ENCODE measurements at regions of chr21 and their contacts with region 1.

Region 1: GRCh38 chr21:37267269-37268184 is at the start of gene VPS26C:
- DNase-seq: peak; percentile 97
- ATAC-seq: peak; percentile 88
- H3K4me3 ChIP-seq: peak within 1 kb of the TSS; percentile 63 to 82
- H3K27ac ChIP-seq: peak within 1 kb of the TSS; percentile 97
- H3K4me1 ChIP-seq: peaks cover 5 to 34% of the 10 kb centered on the region in 2 experiments
- H3K27me3 ChIP-seq: no peaks in the 10 kb centered on the region
- CTCF ChIP-seq: no peak
- POLR2A ChIP-seq: no peak
- RAD21 ChIP-seq: no peak
- total RNA-seq, gene VPS26C: 42.1 TPM

Region 2: GRCh38 chr21:37366482-37367316 is 99.2 kb after region 1 on chr21 and contains the start of gene DYRK1A:
- CTCF ChIA-PET with region 1: no interaction called
- POLR2A ChIA-PET with region 1: interaction called, 4 read pairs
- RAD21 ChIA-PET with region 1: no interaction called
- intact Hi-C with region 1: loop called (anchors 1 kb)
- DNase-seq: peak; percentile 97
- ATAC-seq: peak; percentile 86
- H3K4me3 ChIP-seq: peak within 1 kb of the TSS; percentile 78 to 79
- H3K27ac ChIP-seq: peak within 1 kb of the TSS; percentile 99
- H3K4me1 ChIP-seq: peaks cover 31 to 46% of the 10 kb centered on the region in 2 experiments
- H3K27me3 ChIP-seq: no peaks in the 10 kb centered on the region
- CTCF ChIP-seq: no peak
- POLR2A ChIP-seq: peak; percentile 33
- RAD21 ChIP-seq: no peak
- total RNA-seq, gene DYRK1A: 49.3 TPM

Region 3: DNA sequence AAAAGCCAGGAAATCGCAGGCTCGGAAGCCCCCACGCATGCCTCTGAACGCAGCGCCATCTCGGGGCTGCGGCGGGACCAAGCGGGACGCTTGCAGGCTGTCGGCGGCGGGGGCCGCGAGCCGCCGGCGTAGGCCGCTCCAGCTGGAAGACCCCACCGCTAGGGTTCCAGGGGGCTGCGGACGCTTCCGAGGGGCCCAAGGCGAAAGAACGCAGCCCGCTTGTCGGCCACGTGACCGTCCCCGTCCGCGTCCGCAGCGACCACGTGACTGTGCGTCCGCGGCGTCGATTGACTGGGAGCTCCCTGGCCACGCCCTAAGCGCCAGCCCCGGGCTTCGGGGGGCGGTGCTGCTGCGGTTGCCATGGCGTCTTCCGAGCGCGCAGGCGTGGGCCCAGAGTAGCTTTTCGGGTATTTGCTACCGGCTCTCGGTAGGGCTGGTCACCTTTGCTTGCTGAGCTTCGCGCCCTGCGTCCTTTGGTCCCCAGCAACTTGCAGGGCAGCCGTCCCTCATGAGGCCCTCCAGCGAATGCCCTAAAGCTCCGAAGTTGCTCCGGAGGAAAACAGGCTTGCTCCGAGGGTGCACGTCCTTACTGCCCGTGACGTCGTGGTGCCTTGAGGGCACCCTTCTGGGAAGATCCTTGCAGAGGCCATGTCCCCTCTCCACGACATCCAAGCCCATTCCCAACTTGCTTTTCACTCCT is 296.3 kb after region 1 on chr21:
- CTCF ChIA-PET with region 1: no interaction called
- POLR2A ChIA-PET with region 1: no interaction called
- RAD21 ChIA-PET with region 1: no interaction called
- intact Hi-C with region 1: loop called (anchors 2 kb)
- DNase-seq: peak; percentile 79
- ATAC-seq: peak; percentile 83
- H3K4me3 ChIP-seq: peak overlapping the region; percentile 54 to 64
- H3K27ac ChIP-seq: peak overlapping the region; percentile 89
- H3K4me1 ChIP-seq: peaks cover 16 to 29% of the 10 kb centered on the region in 2 experiments
- H3K27me3 ChIP-seq: no peaks in the 10 kb centered on the region
- CTCF ChIP-seq: no peak
- POLR2A ChIP-seq: peak; percentile 65
- RAD21 ChIP-seq: no peak

Measured in HCT116 (cell line).